ENCODE measurements at regions of chr16 and their contacts with region 1.

Region 1: GRCh38 chr16:27972500-27972899 is 91.0 kb downstream of the GSG1L start:
- DNase-seq: peak; percentile 62
- ATAC-seq: peak; percentile 89
- H3K4me3 Mint-ChIP-seq: no peak overlapping the region
- H3K27ac Mint-ChIP-seq: no peak overlapping the region
- H3K4me1 Mint-ChIP-seq: no peaks in the 10 kb centered on the region
- H3K27me3 Mint-ChIP-seq: no peaks in the 10 kb centered on the region
- CTCF ChIP-seq: no peak; the same call in 1 of the 2 replicates

Region 2: DNA sequence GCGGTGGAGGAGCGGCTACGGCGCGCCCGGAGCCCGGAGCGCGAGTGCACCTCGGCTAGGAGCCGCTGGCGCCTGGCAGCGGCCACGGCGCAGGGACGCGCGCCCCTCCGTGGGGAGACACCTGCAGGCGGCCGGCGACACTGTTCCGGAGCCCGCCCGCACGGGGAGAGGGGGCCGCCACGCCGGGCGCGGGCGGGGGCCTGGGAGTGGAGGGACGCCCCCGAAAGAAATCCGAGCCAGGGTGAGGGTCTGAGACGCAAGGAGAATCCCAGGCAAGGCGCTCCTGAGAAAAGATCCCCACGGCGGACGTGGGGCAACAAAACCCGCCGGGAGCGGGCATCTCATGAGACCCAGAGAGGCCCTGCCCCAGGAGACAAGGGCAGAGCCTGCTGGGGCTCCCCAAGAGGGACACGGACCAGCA is 91.2 kb after region 1 on chr16 and contains the start of gene GSG1L:
- CTCF ChIA-PET with region 1: interaction called, 26 read pairs
- POLR2A ChIA-PET with region 1: no interaction called
- DNase-seq: no peak
- ATAC-seq: peak; percentile 14
- H3K4me3 Mint-ChIP-seq: peak within 1 kb of the TSS; percentile 63
- H3K27ac Mint-ChIP-seq: no peak within 1 kb of the TSS
- H3K4me1 Mint-ChIP-seq: peaks cover 8% of the 10 kb centered on the region; the same call in 1 of the 2 replicates
- H3K27me3 Mint-ChIP-seq: peaks cover 61% of the 10 kb centered on the region
- CTCF ChIP-seq: no peak
- total RNA-seq, gene GSG1L: 0.21 to 0.55 TPM (median 0.28 TPM) in 3 replicates

Region 3: GRCh38 chr16:28218104-28218503 is 245.6 kb after region 1 on chr16:
- CTCF ChIA-PET with region 1: interaction called, 10 read pairs
- POLR2A ChIA-PET with region 1: no interaction called
- DNase-seq: peak; percentile 30
- ATAC-seq: peak; percentile 95
- H3K4me3 Mint-ChIP-seq: no peak overlapping the region
- H3K27ac Mint-ChIP-seq: no peak overlapping the region
- H3K4me1 Mint-ChIP-seq: peaks cover 7% of the 10 kb centered on the region; the same call in 1 of the 2 replicates
- H3K27me3 Mint-ChIP-seq: no peaks in the 10 kb centered on the region
- CTCF ChIP-seq: no peak

Measured in WTC11 (cell line).